ENCODE measurements at regions of chr11 and their contacts with region 1.

Region 1: DNA sequence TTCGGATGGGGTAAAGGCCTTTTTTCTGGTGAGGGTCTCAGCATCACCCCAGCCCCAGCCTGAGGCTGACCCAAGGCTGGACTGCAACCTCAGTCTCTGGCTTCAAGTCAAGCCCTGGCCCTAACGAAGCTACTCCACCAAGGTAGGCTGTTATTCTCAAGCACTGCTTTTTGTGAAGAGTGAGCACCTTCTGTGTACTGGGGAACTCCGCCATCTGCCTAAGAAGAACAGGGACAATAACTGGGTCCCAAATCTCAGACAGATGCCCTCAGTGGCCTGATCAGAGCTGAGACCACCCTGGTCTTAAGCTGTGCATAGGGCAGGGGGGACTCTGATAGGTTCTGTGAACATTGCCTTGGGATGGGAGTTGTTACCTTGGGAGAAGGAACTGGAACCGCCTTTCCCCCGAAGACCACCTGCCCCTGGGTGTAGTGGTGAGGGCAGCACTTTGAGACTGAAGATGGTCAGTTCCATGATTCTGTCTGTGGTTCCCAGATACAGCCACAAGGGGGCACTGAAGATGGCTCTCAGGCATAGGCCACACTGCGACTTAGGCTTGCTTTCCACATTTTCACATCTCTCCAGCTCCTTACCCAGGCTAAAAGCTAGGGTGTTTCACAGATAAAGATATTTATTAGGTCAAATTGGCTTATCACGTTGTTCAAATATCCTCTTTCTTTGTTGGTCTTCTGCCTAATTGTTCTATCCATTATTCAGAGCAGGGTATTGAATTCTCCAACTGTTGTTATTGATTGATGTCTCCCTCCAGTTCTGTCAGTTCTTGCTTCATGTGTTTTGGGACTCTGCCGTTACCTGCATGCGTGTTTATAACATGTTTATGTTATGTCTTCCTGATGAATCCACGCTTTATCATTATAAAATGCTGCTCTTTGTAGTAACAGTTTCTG is 11.8 kb upstream of the UVRAG start:
- DNase-seq: peak in 2 of 3 donors; percentile 61 to 89
- ATAC-seq: peak; percentile 95
- H3K4me3 ChIP-seq: no peak overlapping the region
- H3K4me1 ChIP-seq: no peaks in the 10 kb centered on the region
- CTCF ChIP-seq: peak; percentile 81

Region 2: GRCh38 chr11:75867775-75868374 is 64.7 kb after region 1 on chr11:
- intact Hi-C with region 1: loop called (anchors 5 kb)
- DNase-seq: peak in 1 of 3 donors; percentile 84
- ATAC-seq: peak; percentile 66
- H3K4me3 ChIP-seq: no peak overlapping the region
- H3K4me1 ChIP-seq: no peaks in the 10 kb centered on the region
- CTCF ChIP-seq: peak; percentile 68

Region 3: DNA sequence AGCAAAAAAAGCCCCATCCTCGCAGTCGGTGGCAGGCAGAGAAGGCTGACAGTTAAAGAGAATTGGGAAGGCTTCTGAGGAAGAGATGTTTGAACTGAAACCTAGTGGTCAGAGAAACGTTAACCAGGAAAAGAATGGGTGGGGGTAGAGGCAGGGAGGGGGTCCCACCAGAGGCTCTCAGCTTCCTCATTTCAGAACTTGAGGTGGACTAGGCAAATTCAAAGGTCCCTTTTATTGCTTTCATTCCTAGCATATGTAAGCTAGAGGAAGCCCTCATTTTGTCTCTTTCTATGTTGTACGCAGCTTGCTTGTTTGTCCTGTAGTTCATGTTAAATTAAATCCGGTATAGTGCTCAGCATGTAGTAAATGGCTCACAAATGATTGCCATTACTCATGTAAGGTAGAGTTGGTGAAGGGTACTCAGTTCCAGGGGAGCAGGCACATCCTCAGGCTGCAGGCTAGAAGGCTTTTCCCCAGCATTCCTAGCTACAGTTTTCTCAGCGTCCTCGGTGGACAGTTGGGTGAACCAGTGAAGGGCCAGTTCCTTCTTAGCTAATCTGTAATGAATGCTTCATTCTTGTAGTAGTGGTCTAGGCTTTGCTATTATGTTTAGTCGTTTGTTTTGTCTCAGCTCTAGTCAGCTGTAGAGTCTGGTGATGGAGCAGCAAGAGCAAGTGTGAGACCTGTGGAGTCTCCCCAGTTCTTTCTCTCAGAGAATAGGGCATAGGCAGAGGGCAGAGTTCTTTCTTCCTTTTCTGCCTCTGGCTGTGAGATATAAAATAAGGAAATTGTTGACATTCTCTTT is 70.5 kb after region 1 on chr11:
- intact Hi-C with region 1: loop called (anchors 5 kb)
- DNase-seq: no peak
- ATAC-seq: peak; percentile 51
- H3K4me3 ChIP-seq: no peak overlapping the region
- H3K4me1 ChIP-seq: no peaks in the 10 kb centered on the region
- CTCF ChIP-seq: no peak

Region 4: DNA sequence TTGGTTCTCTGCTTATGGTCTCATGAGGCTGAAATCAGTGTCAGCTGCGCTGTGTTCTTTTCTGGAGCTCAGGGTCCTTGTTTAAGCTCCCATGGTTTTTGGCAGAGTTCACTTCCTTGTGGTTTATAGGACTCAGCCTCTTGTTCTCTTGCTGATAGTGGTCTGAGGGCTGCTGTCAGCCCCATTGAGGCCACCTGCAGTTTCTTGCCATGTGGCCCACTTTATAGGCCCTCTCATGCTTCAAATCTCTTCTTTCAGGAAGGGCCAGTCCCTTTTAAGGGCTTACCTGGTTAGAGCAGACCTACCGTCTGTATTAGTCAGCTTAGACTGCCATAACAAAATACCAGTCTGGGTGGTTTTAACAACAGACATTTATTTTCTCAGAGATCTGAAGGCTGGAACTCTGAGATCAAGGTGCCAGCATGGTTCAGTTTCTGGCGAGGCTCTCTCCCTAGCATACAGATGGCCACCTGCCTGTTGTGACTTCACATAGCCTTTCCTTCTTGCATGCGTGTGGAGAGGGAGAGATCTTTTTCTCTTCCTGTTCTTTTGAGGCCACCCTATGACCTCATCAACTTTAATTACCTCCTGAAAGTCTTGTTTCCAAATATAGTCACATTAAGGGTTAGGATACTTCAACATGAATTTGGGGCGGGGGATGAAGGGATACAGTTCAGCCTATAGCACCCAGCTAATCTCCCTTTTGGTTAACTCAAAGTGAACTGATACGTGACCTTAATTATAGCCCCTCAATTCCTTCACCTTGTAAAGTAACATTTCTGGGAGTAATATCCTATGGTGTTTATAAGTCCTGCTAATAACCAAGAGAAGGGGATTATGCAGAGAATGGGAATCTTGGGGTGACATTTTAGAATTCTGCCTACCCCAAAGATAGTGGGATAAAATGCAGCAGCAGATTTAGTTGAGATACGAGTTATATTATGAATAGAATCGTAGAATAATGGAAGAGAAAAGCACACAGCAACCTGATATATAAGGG is 143.7 kb after region 1 on chr11:
- intact Hi-C with region 1: no loop called
- DNase-seq: peak in 2 of 3 donors; percentile 28
- ATAC-seq: peak; percentile 78
- H3K4me3 ChIP-seq: no peak overlapping the region
- H3K4me1 ChIP-seq: peaks cover 31% of the 10 kb centered on the region
- CTCF ChIP-seq: no peak

Measured in mucosa of descending colon (tissue), 3 donors.